ENCODE measurements at regions of chr1 and their contacts with region 1.

Region 1: DNA sequence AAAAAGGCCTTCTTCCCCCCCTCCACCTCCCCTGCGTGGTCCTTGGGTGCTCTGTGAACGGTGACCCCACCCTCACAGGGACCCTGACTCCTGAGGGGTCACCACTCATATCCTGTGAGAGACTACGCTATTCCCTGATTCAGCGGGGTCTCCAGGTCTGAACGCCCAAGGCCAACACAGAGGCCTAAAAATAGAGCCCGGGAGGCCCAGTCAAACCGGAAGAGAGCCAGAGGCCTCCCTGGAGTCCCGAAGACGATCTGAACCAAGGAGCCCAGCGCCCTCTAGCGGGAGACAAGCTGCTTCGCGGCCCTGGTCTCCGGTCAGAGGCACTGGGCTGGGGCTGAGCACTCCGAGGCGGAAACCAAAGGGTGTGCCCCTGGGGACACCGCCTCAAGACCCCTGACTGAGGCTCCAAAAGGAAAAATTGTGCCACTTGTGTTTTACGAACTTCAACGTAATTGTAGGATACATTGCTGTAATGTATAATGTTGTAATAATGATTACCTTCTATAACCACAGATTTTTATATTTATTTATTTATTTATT is 42.4 kb upstream of the PSEN2 start:
- DNase-seq: peak; percentile 89 to 98 (median 94)
- ATAC-seq: peak; percentile 98
- H3K4me3 ChIP-seq: peak overlapping the region; percentile 28
- H3K4me3 Mint-ChIP-seq: peak overlapping the region; percentile 60
- H3K27ac ChIP-seq: no peak overlapping the region
- H3K27ac Mint-ChIP-seq: peak overlapping the region; percentile 75
- H3K4me1 ChIP-seq: peaks cover 23% of the 10 kb centered on the region
- H3K4me1 Mint-ChIP-seq: peaks cover 43% of the 10 kb centered on the region
- H3K27me3 ChIP-seq: no peaks in the 10 kb centered on the region
- H3K27me3 Mint-ChIP-seq: no peaks in the 10 kb centered on the region
- CTCF ChIP-seq: peak; percentile 91

Region 2: DNA sequence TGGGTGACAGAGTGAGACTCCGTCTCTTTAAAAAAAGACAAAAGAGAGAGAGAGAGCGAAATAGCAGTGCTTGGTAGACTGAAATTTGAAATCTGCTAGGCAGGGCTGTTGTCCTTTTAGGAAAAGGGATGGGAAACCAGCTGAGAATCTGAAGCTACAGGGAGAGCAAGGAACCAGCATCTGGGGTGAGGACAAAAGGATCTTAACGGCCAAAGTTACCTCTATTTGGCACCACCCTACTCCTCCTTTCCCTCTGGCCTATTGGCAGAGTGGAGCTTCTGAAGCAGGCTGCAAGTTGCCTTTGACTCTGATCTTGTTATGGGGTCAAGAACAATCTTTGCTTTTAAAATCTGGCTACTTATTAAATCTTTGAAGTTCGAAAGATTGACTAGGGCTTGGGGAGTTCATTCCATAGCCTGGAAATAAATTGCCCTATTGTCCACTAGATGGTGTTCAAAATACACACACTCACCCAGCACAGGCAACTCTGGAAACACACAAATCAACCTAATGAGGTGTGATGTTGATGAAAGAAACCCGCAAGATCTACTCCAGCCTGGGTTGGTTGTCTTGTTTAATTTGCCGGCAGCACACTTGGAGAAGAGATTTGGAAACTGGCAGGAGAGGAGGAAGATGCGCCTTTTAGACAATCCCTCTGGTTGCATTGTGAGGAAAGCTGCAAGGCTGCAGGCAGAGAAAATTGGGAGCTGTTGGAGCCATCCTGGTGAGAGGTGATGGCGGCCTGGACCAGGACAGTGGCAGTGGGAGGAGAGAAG is 403.6 kb before region 1 on chr1:
- CTCF ChIA-PET with region 1: no interaction called
- POLR2A ChIA-PET with region 1: no interaction called
- intact Hi-C with region 1: loop called in 1 of 2 experiments (anchors 5 kb)
- DNase-seq: peak in 4 of 14 experiments; percentile 35 to 64 (median 59)
- ATAC-seq: peak; percentile 63
- H3K4me3 ChIP-seq: peak overlapping the region; percentile 54
- H3K4me3 Mint-ChIP-seq: no peak overlapping the region
- H3K27ac ChIP-seq: no peak overlapping the region
- H3K27ac Mint-ChIP-seq: no peak overlapping the region
- H3K4me1 ChIP-seq: peaks cover 40% of the 10 kb centered on the region
- H3K4me1 Mint-ChIP-seq: peaks cover 24% of the 10 kb centered on the region
- H3K27me3 ChIP-seq: peaks cover 0 to 2% of the 10 kb centered on the region in 2 experiments
- H3K27me3 Mint-ChIP-seq: no peaks in the 10 kb centered on the region
- CTCF ChIP-seq: peak; percentile 68

Region 3: DNA sequence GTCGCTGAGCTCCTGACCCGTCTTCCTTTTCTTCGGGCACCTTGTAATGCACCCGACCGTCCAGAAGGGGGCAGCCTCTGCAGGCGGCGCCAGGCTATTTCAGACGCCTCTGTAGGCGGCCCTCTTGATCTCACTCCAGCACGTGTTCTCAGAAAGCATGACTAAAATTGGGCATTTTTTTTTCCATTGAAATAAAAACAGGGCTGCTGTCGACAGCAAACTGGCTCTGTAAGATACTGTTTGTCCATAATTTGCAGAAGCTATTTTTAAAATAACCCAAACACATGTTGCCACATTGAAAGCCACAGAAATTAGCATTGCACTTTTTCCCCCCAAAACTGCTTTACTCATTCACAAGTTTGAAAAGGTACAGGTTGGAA is 201.5 kb before region 1 on chr1:
- CTCF ChIA-PET with region 1: interaction called, 30 read pairs
- POLR2A ChIA-PET with region 1: interaction called, 4 read pairs
- intact Hi-C with region 1: loop called (anchors 1 kb)
- DNase-seq: peak; percentile 65 to 88 (median 73)
- ATAC-seq: peak; percentile 97
- H3K4me3 ChIP-seq: peak overlapping the region; percentile 43
- H3K4me3 Mint-ChIP-seq: no peak overlapping the region
- H3K27ac ChIP-seq: no peak overlapping the region
- H3K27ac Mint-ChIP-seq: peak overlapping the region; percentile 46
- H3K4me1 ChIP-seq: peaks cover 18% of the 10 kb centered on the region
- H3K4me1 Mint-ChIP-seq: peaks cover 22% of the 10 kb centered on the region
- H3K27me3 ChIP-seq: no peaks in the 10 kb centered on the region
- H3K27me3 Mint-ChIP-seq: no peaks in the 10 kb centered on the region
- CTCF ChIP-seq: peak; percentile 99

Region 4: GRCh38 chr1:226687426-226687825 is 140.6 kb before region 1 on chr1:
- CTCF ChIA-PET with region 1: interaction called, 4 read pairs
- POLR2A ChIA-PET with region 1: no interaction called
- intact Hi-C with region 1: loop called in 1 of 2 experiments (anchors 5 kb)
- DNase-seq: peak in 12 of 14 experiments; percentile 32 to 81 (median 54)
- ATAC-seq: peak; percentile 27
- H3K4me3 ChIP-seq: no peak overlapping the region
- H3K4me3 Mint-ChIP-seq: peak overlapping the region; percentile 72
- H3K27ac ChIP-seq: peak overlapping the region; percentile 47 to 70
- H3K27ac Mint-ChIP-seq: peak overlapping the region; percentile 98
- H3K4me1 ChIP-seq: peaks cover 94% of the 10 kb centered on the region
- H3K4me1 Mint-ChIP-seq: peaks cover 100% of the 10 kb centered on the region
- H3K27me3 ChIP-seq: no peaks in the 10 kb centered on the region
- H3K27me3 Mint-ChIP-seq: no peaks in the 10 kb centered on the region
- CTCF ChIP-seq: peak; percentile 45

Region 5: DNA sequence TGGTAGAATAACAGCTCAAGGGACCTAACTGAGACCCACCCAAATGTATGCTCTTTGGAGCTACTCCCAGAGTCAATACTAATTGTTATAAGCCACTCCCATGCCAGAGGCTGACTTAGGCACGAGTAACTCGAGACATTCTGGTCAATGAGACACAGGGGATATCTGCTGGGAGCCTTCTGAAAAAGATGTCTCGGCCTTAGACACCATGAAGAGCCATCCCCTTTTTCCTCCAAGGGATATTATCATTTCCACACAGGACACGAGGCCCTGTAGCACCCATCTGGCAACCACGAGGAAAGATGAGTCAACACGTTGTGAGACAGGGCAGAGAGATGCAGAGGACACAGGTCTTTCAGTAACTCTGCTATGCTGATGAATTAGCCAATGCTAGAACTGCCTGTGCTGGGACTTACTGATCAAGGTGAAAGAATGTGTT is 119.7 kb before region 1 on chr1:
- CTCF ChIA-PET with region 1: interaction called, 5 read pairs
- POLR2A ChIA-PET with region 1: interaction called, 3 read pairs
- intact Hi-C with region 1: loop called (anchors 5 to 10 kb)
- DNase-seq: peak in 2 of 14 experiments; percentile 51 to 58
- ATAC-seq: peak; percentile 13
- H3K4me3 ChIP-seq: no peak overlapping the region
- H3K4me3 Mint-ChIP-seq: peak overlapping the region; percentile 87
- H3K27ac ChIP-seq: peak overlapping the region; percentile 31 to 75
- H3K27ac Mint-ChIP-seq: peak overlapping the region; percentile 95
- H3K4me1 ChIP-seq: peaks cover 79% of the 10 kb centered on the region
- H3K4me1 Mint-ChIP-seq: peaks cover 95% of the 10 kb centered on the region
- H3K27me3 ChIP-seq: no peaks in the 10 kb centered on the region
- H3K27me3 Mint-ChIP-seq: peaks cover 11% of the 10 kb centered on the region
- CTCF ChIP-seq: peak; percentile 18

Measured in CD4-positive, alpha-beta T cell (primary cell).